ENCODE measurements at regions of chr14 and their contacts with region 1.

Region 1: DNA sequence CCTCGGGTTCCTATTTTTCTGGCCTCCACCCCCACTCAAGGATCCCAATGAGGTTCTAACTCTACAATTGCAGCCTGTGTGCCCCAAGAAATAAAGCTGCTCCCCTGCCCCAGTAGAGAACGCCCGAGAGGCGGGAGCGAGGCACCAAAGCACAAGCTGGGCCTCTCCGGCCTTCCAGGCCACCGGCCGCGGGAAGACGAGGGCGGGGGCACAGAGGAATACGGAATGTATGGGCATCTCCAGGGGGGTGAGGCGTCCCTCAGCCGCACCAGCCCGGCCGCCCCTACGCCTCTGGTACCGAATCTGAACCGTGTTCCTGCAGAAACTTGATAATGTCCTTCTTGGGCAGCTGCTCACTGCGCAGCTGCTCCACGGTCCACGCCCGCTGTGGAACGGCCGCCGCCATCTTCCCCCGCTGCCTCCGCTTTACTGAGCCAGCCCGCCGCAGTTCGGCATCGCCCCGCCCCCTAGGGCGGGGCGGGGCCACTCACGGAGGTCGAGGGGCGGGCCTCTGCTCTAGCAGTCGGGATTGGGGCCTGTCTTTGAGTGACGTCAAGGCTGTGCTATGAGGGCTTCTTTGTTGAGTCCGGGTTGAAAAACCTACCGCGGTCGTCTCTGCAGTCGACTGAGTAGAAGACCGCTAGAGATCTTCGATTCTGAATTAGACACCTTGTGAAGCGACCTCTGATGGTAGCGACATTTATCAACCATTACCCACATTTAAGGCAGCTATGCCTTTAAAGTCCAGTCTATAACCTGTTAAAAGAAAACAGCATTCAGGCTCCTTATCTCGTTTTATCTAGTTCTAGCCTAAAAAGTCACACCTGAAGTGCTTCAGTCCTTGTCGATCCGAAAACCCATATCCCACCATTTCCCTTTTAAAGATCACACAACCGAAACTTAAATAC is at the start of gene FKBP3:
- DNase-seq: peak; percentile 98 to 99
- H3K4me3 ChIP-seq: peak within 1 kb of the TSS; percentile 83 to 86
- H3K27ac ChIP-seq: peak within 1 kb of the TSS; percentile 86 to 93
- H3K4me1 ChIP-seq: peaks cover 6 to 30% (median 11%) of the 10 kb centered on the region in 4 donors
- H3K27me3 ChIP-seq: no peaks in the 10 kb centered on the region
- CTCF ChIP-seq: no peak

Region 2: GRCh38 chr14:44897045-44897844 is 237.1 kb before region 1 on chr14:
- intact Hi-C with region 1: loop called (anchors 5 kb)
- DNase-seq: peak; percentile 99
- H3K4me3 ChIP-seq: peak overlapping the region; percentile 76 to 77
- H3K27ac ChIP-seq: peak overlapping the region; percentile 99
- H3K4me1 ChIP-seq: peaks cover 0 to 45% (median 24%) of the 10 kb centered on the region in 4 donors
- H3K27me3 ChIP-seq: no peaks in the 10 kb centered on the region
- CTCF ChIP-seq: no peak

Region 3: DNA sequence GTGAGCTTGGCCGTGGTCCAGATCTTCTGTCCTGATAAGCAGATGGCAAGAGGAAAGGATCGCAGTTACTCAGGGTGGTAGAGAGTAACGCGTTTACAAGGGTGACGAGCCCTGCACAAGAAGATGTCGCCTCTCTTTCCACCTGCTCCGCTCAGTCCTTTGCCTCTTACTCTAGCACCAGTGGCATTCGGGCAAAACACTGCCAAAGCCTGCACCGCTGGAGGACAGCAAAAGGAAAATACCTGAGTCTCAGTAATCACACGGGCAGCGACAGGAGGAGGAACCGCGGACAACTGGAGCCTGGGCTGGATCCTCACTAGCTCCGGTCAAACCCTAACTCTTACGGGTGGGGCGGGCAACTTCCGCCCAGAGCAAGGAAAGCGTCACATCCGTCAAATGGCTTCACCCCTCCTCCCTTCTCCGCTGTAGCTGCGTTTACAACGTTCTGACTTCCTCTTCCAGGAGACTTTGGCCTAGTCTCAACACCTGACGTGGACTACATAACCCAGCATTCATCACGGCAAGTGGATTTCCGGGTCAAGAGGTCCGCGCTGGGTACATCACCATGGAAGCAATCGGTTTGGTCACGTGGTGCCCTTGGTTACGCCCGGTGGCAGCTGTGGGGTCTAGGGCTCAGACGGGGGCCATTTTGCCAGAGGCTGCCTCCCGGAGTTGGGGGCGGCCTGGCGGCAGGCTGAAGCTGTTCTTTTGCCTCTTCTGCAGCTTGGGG is 172.5 kb before region 1 on chr14 and contains the starts of genes KLHL28 and TOGARAM1:
- intact Hi-C with region 1: loop called (anchors 2 kb)
- DNase-seq: peak; percentile 99
- H3K4me3 ChIP-seq: peak within 1 kb of the TSS; percentile 76 to 79
- H3K27ac ChIP-seq: peak within 1 kb of the TSS; percentile 80 to 83
- H3K4me1 ChIP-seq: peaks cover 0 to 70% (median 31%) of the 10 kb centered on the region in 4 donors
- H3K27me3 ChIP-seq: no peaks in the 10 kb centered on the region
- CTCF ChIP-seq: no peak

Region 4: DNA sequence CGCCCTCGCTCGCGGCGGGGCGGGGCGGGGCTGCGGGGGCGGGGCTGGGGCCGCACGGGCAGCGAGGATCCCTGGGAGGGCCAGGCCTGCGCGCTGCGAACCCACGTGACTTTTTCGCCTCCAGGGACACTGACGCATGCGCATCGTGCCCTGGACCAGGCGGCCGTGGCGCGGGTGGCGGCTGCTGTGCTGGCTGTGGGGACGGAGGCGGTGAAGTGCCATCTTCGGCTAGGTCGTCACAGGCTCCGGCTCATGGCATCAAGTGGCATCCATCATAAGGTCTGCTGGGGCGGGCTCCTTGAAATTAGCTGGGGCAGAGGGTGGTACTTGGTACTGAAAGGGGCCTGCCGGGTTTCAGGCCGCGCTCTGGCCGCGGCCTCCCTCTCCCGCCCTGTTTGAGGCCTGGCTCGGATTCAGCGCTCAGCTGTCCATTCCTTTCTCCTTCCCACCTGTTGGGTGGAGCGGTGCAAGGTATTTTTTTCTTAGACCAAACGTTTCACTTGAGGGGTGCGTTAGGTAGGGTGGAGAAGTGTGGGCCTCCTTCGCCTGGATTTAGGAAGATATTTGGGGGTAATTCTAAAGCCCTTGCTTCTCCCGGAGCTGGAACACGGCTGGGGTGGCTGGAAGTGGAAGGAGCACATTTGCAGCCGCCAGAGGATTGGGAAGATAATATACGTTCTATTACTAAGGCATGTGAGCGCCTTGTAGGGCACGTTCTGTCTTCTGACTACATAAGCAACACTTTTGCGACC is 50.2 kb before region 1 on chr14 and contains the start of gene PRPF39:
- intact Hi-C with region 1: loop called (anchors 2 kb)
- DNase-seq: peak; percentile 92 to 97
- H3K4me3 ChIP-seq: peak within 1 kb of the TSS; percentile 60 to 90
- H3K27ac ChIP-seq: peak within 1 kb of the TSS; percentile 79 to 86
- H3K4me1 ChIP-seq: peaks cover 0 to 46% (median 10%) of the 10 kb centered on the region in 4 donors
- H3K27me3 ChIP-seq: no peaks in the 10 kb centered on the region
- CTCF ChIP-seq: no peak

Region 5: GRCh38 chr14:45253068-45253753 is 118.9 kb after region 1 on chr14 and contains the start of gene MIS18BP1:
- intact Hi-C with region 1: loop called (anchors 10 kb)
- DNase-seq: peak; percentile 94 to 96
- H3K4me3 ChIP-seq: peak within 1 kb of the TSS; percentile 74 to 84
- H3K27ac ChIP-seq: peak within 1 kb of the TSS; percentile 80 to 85
- H3K4me1 ChIP-seq: peaks cover 0 to 19% (median 12%) of the 10 kb centered on the region in 4 donors
- H3K27me3 ChIP-seq: no peaks in the 10 kb centered on the region
- CTCF ChIP-seq: peak; percentile 53 to 55

Measured in tibial artery (tissue), 4 donors.